Cardiac septum (tissue), 1 donor: ENCODE measurements at regions of chr3 and their contacts with region 1.

Region 1: GRCh38 chr3:177041021-177041729 is 156.1 kb downstream of the TBL1XR1 start:
- DNase-seq: no peak

Region 2: DNA sequence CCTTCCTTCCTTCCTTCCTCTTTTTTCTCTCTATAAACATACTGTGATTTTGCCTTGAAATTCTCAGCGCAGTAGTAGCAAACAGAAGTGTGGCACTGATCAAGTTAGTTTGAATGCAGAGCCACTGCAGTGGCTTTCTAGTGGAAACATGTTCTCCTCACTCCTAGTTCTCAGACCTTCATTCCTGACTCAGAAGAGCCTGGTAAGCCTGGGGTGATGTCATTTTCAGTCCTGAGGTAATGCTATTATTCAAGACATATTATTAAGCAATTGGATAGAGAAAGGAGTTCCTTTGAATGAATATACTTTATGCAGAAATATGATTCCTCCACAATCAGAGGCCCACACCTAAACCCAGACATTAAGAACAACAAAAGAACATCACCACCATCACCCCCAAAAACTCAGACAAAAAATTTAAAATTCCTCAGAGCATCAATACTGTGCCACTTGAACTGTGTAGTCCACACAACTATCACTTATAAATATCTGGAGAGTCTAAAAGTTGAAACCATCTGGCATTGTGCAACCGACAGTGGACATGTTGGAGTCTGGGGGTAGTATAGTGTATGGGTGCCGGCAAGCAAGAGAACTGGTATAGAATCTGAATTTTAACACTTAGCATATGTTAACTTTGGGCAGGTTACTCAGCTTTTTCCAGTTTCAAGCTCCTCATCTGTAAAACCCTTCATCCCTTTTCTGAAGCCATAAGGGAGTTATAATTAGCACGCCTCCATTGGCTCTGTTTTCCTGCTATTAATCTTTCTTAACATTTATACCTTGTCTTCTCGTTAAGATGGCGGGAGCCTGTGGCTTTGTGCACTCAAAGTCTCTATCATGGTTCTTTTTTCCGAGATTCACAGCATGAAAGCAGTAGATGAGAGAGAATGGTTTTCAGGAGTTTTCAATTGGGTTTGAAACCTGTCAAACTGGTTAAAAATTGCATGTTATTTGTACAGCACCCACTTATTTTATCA is 411.6 kb after region 1 on chr3:
- intact Hi-C with region 1: loop called (anchors 10 kb)
- DNase-seq: no peak